Psoas muscle (tissue), 8 donors: ENCODE measurements at regions of chr5 and their contacts with region 1.

Region 1: GRCh38 chr5:172932313-172933017 is 26.8 kb upstream of the RPL26L1 start:
- DNase-seq: peak; percentile 78 to 89
- ATAC-seq: peak; percentile 91 to 97 (median 94)
- H3K4me3 ChIP-seq: no peak overlapping the region
- H3K27ac ChIP-seq: no peak overlapping the region
- H3K4me1 ChIP-seq: peaks cover 14% of the 10 kb centered on the region
- H3K27me3 ChIP-seq: no peaks in the 10 kb centered on the region
- CTCF ChIP-seq: peak; percentile 97

Region 2: GRCh38 chr5:172714491-172715421 is 217.7 kb before region 1 on chr5:
- intact Hi-C with region 1: loop called (anchors 1 to 2 kb)
- DNase-seq: peak; percentile 81 to 86
- ATAC-seq: peak; percentile 66 to 80 (median 78)
- H3K4me3 ChIP-seq: no peak overlapping the region
- H3K27ac ChIP-seq: peak overlapping the region; percentile 62
- H3K4me1 ChIP-seq: no peaks in the 10 kb centered on the region
- H3K27me3 ChIP-seq: no peaks in the 10 kb centered on the region
- CTCF ChIP-seq: peak; percentile 76

Region 3: DNA sequence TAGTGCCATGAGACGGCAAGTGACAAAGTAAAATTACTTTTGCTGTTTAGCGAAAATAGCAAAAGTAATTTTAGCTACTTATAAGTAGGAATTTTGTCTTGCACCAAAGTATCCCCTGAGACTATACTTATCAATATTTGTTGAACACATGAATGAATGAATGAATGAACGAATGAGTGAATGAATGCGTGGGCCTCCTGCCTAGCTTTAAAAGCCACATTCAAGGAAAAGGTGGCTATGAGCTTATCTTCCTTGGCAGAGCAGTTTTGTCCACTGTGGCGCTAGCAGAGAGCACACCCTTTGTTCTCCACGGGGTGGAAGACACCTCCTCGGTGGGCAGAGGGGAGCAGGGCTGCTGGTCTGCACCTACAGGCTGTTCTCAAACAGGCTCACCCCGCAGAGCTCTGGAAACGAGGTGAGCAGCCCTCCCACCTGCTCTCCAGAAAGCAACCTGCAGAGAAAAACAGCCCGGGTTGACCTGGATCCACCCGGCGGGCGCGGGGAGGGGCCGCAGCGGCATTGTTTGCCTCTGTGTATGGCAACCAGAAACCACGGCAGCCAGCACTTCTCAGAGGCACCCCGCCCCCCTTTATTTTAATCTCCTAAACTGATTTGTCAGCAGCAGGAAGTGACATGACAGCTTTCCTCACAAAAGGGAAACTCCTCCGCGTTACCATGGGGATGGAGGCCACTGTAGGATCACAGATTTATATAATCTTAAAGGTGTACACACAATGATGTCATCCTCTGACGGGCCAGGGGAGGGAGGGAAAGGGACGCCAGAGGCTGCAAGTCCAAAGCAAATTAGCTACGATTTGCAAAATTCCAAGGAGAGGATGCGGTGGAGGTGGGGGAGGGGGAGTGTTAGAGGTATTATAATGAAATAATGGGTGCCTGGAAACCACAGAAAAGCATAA is 167.4 kb before region 1 on chr5:
- intact Hi-C with region 1: loop called in 1 of 2 experiments (anchors 5 kb)
- DNase-seq: peak; percentile 86 to 91
- ATAC-seq: peak; percentile 39 to 56 (median 50)
- H3K4me3 ChIP-seq: peak overlapping the region; percentile 79
- H3K27ac ChIP-seq: peak overlapping the region; percentile 98
- H3K4me1 ChIP-seq: peaks cover 21% of the 10 kb centered on the region
- H3K27me3 ChIP-seq: no peaks in the 10 kb centered on the region
- CTCF ChIP-seq: no peak